A549 (cell line): ENCODE measurements at regions of chr17 and their contacts with region 1.

Region 1: GRCh38 chr17:75124041-75124818 is 7.3 kb downstream of the NT5C start:
- DNase-seq: peak; percentile 99 to 100
- ATAC-seq: peak; percentile 93
- H3K4me3 ChIP-seq: peak overlapping the region; percentile 31
- H3K27ac ChIP-seq: peak overlapping the region; percentile 92 to 97
- H3K4me1 ChIP-seq: peaks cover 61% of the 10 kb centered on the region
- CTCF ChIP-seq: no peak; the same call in 2 of the 3 replicates
- EP300 ChIP-seq: peak; percentile 30 to 80; a peak in 3 of 5 replicates
- POLR2A ChIP-seq: peak; percentile 62
- RAD21 ChIP-seq: peak; percentile 30 to 39; a peak in 4 of 5 replicates

Region 2: DNA sequence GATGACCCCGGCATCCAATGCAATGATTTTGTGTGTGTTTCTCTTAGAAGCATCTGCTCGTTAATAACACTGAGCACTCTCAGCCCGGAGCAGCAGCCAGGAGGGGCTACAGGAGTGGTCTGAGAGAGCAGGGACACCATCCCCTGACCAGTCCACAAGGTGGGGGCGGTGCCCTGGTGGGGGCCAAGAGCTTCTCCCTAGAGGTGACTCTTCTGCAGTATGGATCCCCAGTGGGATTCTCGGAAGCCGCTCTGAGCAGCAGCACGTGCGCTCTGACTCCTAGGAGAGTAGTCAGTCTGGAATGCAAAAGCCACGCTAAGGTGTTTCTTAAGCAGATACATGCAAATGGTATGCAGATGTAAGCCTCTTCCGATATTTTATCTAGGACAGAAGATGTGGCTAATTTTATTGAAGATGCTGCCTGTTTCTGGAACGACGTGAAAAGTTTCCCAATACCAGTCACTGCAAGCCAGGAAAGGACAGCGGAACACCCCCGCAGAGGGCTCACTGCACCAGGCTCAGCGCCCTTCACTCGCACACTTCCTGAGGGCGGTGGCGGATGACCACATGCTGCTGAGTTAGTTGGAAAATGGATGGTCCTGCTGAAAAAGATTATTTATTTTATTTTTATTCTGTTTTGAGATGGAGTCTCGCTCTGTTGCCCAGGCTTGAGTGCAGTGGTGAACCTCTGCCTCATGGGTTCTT is 241.0 kb before region 1 on chr17:
- CTCF ChIA-PET with region 1: no interaction called
- POLR2A ChIA-PET with region 1: no interaction called
- DNase-seq: no peak
- ATAC-seq: no peak
- H3K4me3 ChIP-seq: no peak overlapping the region
- H3K27ac ChIP-seq: no peak overlapping the region
- H3K4me1 ChIP-seq: no peaks in the 10 kb centered on the region
- CTCF ChIP-seq: no peak
- EP300 ChIP-seq: no peak
- POLR2A ChIP-seq: no peak
- RAD21 ChIP-seq: no peak

Region 3: GRCh38 chr17:75087558-75088453 is 36.4 kb before region 1 on chr17 and contains the start of gene SLC16A5:
- CTCF ChIA-PET with region 1: interaction called, 3,429 read pairs
- POLR2A ChIA-PET with region 1: interaction called, 13 read pairs
- DNase-seq: peak; percentile 95 to 99
- ATAC-seq: peak; percentile 75 to 82
- H3K4me3 ChIP-seq: peak within 1 kb of the TSS; percentile 67
- H3K27ac ChIP-seq: peak within 1 kb of the TSS; percentile 95 to 96
- H3K4me1 ChIP-seq: peaks cover 77% of the 10 kb centered on the region
- CTCF ChIP-seq: no peak
- EP300 ChIP-seq: no peak
- POLR2A ChIP-seq: peak; percentile 87
- RAD21 ChIP-seq: peak in 1 of 2 experiments; percentile 28; a peak in 1 of 5 replicates
- polyA plus RNA-seq, gene SLC16A5: 19.0 and 20.1 TPM in 2 replicates

Region 4: GRCh38 chr17:75096082-75096625 is 28.1 kb before region 1 on chr17:
- CTCF ChIA-PET with region 1: interaction called, 3,429 read pairs
- POLR2A ChIA-PET with region 1: interaction called, 10 read pairs
- DNase-seq: peak; percentile 90 to 99
- ATAC-seq: peak; percentile 85 to 87
- H3K4me3 ChIP-seq: no peak overlapping the region
- H3K27ac ChIP-seq: peak overlapping the region; percentile 71 to 96
- H3K4me1 ChIP-seq: peaks cover 60% of the 10 kb centered on the region
- CTCF ChIP-seq: no peak
- EP300 ChIP-seq: peak in 1 of 2 experiments; percentile 79; a peak in 2 of 5 replicates
- POLR2A ChIP-seq: no peak
- RAD21 ChIP-seq: peak; percentile 28 to 40; a peak in 3 of 5 replicates

Region 5: DNA sequence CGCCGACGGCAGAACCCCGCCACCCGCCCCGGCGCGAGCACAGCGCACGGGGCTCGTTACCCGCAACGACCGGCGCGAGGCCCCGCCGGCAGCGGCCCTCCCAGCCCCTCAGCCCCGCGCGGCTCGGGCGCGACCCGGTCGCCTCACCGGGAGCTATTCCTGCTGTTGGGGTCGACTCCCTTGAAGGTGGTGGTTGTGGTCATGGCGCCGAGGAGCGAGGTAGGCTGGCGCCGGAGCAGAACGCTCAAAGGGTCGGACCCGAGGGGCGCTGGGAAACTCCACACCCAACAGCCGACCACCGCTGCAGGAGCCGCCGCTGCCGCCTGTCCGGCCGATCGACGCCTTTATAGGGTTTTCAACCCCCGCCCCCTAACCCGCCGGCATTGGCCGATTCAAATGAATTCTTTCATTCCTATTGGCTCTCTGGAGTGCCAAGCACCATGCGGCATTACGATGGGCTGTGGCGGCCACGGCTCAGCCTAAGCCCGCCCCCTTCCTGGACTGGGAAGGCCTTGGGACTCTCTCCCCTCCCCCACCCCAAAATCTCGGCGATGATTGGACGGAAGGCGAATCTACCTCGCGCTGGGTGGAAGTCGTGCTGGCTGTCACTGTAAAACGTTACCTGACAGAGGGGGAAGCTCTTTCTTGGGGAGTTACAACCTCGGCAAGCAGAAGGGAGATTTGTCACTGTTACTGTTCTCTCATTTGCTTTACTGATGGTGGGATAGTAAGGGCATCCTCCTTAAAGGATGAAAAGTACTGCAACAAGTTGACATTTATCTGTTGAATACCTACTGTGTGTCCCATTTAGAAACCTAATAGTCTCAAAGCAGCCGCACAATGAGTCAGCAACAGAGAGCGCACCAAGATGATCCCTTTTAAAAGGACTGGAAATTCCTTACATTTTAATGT is 30.2 kb after region 1 on chr17 and contains the start of gene JPT1:
- CTCF ChIA-PET with region 1: interaction called, 3,429 read pairs
- POLR2A ChIA-PET with region 1: interaction called, 19 read pairs
- DNase-seq: peak; percentile 99 to 100
- ATAC-seq: peak; percentile 85 to 94
- H3K4me3 ChIP-seq: peak within 1 kb of the TSS; percentile 78
- H3K27ac ChIP-seq: peak within 1 kb of the TSS; percentile 85 to 95
- H3K4me1 ChIP-seq: peaks cover 54% of the 10 kb centered on the region
- CTCF ChIP-seq: no peak
- EP300 ChIP-seq: no peak
- POLR2A ChIP-seq: peak; percentile 100
- RAD21 ChIP-seq: no peak
- polyA plus RNA-seq, gene JPT1: 141 and 196 TPM in 2 replicates

Region 6: DNA sequence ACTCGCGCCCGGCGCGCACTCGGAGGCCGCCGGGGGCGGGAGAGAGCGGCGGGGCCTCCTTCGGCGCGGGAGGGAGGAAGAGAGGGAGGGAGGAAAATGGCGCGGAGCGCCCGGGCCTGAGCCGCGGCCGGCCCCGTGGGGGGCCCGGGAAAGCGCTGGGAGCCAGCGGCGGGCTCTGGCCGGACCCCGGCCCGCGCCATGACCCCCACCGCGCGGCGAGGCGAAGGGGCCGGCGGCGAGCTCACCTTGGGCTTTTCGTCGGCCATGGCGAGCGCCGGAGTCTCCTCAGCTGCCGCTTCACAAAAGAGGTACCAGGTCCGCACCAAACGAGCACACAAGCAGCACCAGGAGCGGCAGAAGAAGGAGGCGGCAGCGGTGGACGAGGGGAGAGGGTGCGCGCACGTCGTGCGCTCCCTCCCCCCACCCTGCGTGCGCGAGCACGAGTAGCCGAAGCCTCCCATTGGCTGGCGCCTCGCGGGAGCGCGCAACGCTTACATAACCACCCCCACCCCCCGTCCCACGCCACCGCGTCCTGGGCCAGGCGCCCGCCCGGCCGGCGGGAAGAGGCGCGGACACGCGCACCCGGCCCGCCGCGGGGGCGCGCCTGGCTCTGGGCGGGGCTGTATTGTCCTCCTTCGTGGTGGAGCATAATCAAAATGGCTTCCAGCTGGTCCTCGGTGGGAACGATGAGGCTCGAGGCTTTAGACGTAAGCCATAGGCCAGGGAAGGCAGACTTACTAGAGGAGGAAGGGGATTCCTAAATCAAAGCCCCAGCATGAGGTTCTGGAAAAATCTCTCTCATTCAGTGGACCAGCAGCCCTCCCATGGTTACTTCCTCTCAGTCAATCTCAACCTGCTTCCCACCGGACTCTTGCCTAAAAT is 58.6 kb after region 1 on chr17 and contains the start of gene SUMO2:
- CTCF ChIA-PET with region 1: no interaction called
- POLR2A ChIA-PET with region 1: interaction called, 10 read pairs
- DNase-seq: peak; percentile 98
- ATAC-seq: peak; percentile 87 to 92
- H3K4me3 ChIP-seq: peak within 1 kb of the TSS; percentile 96
- H3K27ac ChIP-seq: peak within 1 kb of the TSS; percentile 93 to 98
- H3K4me1 ChIP-seq: peaks cover 15% of the 10 kb centered on the region; the same call in 2 of the 3 replicates
- CTCF ChIP-seq: no peak
- EP300 ChIP-seq: no peak
- POLR2A ChIP-seq: peak; percentile 67
- RAD21 ChIP-seq: no peak
- polyA plus RNA-seq, gene SUMO2: 400 and 545 TPM in 2 replicates